ENCODE measurements at regions of chr17 and their contacts with region 1.

Region 1: DNA sequence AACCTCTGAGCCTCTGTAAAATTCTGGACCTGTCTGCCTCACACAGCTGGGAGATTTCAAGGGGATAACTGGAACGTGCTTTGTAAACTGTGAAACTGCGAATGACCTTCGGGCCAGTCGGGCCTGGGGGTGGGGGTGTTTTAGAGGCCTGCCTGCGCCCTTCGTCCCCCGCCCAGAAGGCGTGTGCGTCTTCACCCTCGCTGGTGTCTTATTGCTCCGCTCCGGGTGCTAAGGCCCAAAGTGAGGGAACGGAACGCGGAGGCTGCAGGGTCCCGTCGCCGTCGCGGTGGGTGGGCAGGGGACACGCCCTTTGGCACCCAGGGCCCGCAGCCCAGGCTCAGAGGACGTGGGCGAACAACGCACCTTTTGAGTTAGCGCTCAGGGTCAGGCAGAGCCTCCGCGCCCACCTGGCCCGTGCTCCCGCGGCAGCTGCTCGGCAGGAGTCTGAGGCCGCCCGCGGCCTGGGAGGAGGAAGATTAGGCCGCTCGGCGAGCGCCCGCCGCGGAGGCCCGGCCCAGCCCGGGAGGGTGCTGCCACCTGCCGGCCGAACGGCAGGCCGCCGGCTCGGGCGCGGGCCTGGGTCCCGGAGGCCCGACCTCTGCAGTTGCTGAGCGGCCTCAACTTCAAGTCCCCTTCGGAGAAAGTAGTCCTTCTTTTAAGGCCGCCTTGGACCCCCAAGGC is 29.7 kb downstream of the DCAKD start:
- DNase-seq: peak; percentile 68
- H3K4me3 Mint-ChIP-seq: peak overlapping the region; percentile 0
- H3K27ac Mint-ChIP-seq: no peak overlapping the region
- H3K4me1 Mint-ChIP-seq: peaks cover 17% of the 10 kb centered on the region
- H3K27me3 Mint-ChIP-seq: peaks cover 34% of the 10 kb centered on the region

Region 2: DNA sequence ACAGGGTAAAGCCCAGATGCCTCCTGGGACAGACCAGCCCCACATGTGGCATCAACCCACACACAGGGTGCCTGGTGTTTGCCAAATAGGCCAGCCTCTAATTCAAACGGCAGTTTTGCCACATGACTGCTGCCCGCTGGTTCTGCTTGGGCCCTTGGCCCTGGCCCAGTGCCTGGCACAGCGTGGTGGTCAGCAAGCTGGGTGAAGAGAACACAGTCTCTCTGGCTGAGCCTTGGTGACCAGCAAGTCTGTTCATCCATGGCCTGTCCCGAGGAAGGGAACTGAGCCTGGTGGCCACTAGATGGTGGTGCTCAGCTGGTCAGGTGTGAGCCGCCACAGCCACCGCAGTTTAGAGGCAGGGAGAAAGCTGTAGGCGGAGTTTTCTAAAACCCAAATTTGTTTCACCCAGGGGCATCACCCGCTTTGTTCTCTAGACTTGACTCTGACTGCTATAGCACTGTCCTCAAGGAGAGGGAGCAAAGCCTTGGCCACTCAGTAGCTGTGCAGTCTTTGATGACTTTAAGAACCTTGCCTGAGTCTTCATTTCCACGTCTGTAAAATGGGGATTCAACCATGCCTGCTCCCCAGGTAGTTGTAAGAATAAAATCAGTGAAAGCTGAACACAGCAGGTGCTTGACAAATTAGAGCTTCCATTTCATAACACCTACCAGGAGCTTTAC is 101.7 kb before region 1 on chr17:
- CTCF ChIA-PET with region 1: interaction called, 53 read pairs
- POLR2A ChIA-PET with region 1: interaction called, 16 read pairs
- DNase-seq: peak; percentile 69
- H3K4me3 Mint-ChIP-seq: no peak overlapping the region
- H3K27ac Mint-ChIP-seq: no peak overlapping the region
- H3K4me1 Mint-ChIP-seq: no peaks in the 10 kb centered on the region
- H3K27me3 Mint-ChIP-seq: peaks cover 26% of the 10 kb centered on the region

Region 3: DNA sequence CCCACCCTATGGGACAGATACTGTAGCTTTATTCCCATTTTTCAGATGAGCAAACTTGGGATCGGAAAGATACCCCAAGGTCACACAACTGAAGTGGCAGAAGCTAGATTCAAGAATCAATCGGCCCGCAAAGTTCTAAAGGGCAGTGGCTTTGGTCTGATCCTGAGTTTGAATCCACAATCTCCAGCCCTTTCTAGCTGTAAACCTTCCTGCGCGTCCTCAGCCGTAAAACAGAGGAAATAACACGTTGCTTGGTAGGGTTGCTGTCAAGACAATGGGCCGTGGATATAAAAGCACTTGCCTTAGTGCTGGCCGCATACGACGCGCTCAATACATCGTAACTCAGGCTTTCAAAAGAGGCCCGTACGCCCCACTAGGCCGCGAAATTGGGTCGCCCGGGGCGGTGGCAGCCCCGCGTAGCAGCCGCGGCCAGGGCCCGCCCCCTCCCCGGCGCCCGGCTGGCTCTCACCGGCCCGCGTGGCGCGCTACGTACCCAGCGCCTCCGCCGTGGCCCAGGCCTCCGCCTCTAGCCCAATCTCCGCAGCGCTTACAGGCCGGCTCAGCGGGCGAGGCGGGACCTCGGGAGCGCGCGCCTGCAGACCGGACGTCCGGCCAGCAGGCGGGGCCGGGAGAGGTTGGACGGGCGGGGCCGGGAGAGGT is 29.4 kb after region 1 on chr17 and contains the start of gene DCAKD:
- CTCF ChIA-PET with region 1: interaction called, 12 read pairs
- POLR2A ChIA-PET with region 1: interaction called, 5 read pairs
- DNase-seq: peak; percentile 95
- H3K4me3 Mint-ChIP-seq: peak within 1 kb of the TSS; percentile 96
- H3K27ac Mint-ChIP-seq: peak within 1 kb of the TSS; percentile 98
- H3K4me1 Mint-ChIP-seq: peaks cover 49% of the 10 kb centered on the region
- H3K27me3 Mint-ChIP-seq: no peaks in the 10 kb centered on the region
- total RNA-seq, gene DCAKD: 25.9 to 26.2 TPM

Measured in activated CD4-positive, alpha-beta memory T cell treated with anti-CD3 and anti-CD28 coated beads, Interleukin-2, amount 10 ng/mL, durations not matched to agents 7 days and 5 days (primary cell).